ENCODE measurements at regions of chr6 and their contacts with region 1.

Region 1: DNA sequence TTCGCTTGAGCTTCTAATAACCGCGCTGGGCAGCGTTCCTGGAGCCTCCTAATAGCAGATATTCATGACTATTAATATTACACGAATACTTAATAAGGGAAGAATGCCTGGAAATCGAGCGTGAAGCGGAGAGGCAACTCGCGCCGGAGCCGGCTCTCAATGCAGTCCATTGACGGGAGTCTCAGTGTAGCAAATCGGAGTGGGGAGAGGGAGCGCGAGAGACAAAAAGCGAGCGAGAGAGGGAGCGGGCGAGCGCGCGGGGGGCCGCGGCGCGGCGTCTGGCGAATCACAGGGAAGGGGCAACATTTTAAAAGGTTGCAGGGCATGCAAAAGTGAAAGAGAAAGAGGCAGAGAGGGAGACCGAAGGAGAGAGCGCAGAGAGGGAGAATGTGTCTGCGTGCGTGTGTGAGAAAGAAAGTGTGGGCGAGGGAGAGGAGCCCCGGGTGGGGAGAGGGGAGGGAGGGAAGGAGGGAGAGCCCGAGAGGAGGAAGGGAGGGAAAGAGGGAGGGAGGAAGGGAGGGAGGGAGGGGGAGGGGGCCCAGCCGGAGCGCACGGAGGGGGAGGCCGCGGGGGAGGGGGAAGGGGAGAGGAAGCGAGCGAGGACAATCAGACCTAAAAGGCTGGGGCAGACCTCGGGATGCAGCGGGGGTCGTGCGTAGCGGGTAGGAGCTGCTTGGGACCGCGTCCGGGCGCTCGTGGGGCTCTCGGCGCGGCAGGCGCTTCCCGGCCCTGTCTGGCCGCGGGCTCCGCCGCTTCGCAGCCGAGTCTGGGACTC is 2.7 kb downstream of the TFAP2A start:
- DNase-seq: no peak
- ATAC-seq: peak; percentile 59
- H3K4me3 ChIP-seq: peak overlapping the region; percentile 96 to 100
- H3K27ac ChIP-seq: peak overlapping the region; percentile 99
- H3K4me1 ChIP-seq: peaks cover 42% of the 10 kb centered on the region
- H3K27me3 ChIP-seq: no peaks in the 10 kb centered on the region
- CTCF ChIP-seq: no peak

Region 2: DNA sequence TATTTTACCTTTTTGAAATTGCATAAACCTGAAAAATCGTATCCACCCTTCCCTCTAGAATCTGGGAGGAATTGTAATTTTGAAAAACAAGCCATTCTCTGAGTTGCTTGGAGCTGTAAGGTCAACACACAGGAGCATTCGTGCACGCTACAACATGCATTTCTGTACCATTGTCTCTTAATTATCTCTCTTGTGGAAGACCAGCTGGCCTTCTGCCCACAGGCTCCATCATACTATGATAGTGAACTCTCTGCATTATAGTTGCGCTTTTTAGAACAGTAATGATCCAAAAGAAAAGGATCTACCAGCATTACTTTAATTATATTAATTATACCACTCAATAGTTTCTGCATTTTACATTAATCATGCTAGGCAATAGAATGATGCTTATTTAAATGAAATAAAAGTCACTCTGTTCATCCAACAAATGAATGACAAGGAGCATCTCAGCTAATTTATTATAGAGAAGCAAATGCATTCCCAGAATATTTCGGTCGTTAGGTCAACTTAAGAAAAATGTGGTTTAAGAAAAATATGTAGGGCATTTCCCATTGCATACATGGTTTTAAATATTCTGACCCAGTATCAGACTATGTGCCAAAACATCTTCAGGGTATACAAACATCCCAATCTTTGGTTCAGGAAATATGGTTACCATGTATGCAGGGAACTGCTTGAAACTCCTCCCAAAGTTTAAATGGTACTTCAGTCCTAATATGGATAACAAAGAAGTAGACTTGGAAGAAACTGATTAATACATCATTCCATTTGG is 260.8 kb before region 1 on chr6:
- CTCF ChIA-PET with region 1: no interaction called
- POLR2A ChIA-PET with region 1: no interaction called
- in situ Hi-C with region 1: no loop called
- intact Hi-C with region 1: no loop called
- DNase-seq: no peak
- ATAC-seq: no peak
- H3K4me3 ChIP-seq: no peak overlapping the region
- H3K27ac ChIP-seq: no peak overlapping the region
- H3K4me1 ChIP-seq: no peaks in the 10 kb centered on the region
- H3K27me3 ChIP-seq: no peaks in the 10 kb centered on the region
- CTCF ChIP-seq: no peak

Region 3: DNA sequence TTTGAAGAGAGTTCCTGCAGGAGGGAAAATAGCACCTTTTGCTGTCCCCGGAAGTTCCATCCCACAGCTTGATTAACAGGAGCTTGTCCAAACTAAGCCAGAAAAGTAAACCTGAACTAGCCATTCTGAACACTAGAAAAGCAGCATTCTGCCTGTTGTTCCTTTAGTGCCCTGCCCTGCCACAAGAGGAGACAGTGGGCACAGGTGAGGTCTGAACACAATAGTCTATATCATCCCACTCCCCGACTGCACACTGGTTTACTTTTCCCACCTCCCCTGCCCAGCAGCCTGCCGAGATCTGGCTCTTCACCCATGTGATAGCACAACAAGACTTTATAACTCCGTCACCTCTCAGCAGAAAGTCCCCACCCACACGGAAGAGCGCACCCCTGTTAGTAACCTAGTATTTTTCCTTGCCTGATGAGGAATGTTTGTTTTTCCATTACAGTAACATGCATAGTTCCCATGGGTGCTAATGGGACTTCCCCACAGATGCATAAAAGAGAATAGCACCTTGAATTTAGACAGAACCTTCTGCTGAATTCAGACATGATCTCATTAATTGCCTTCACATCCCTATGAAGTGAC is 56.9 kb before region 1 on chr6:
- CTCF ChIA-PET with region 1: interaction called, 17 read pairs
- POLR2A ChIA-PET with region 1: interaction called, 3 read pairs
- in situ Hi-C with region 1: no loop called
- intact Hi-C with region 1: no loop called
- DNase-seq: no peak
- ATAC-seq: peak; percentile 87
- H3K4me3 ChIP-seq: peak overlapping the region in 1 of 2 experiments; percentile 4; a peak in 1 of 4 replicates
- H3K27ac ChIP-seq: peak overlapping the region; percentile 37; the same call in 1 of the 2 replicates
- H3K4me1 ChIP-seq: peaks cover 4% of the 10 kb centered on the region
- H3K27me3 ChIP-seq: no peaks in the 10 kb centered on the region
- CTCF ChIP-seq: no peak